Activated naive CD4-positive, alpha-beta T cell treated with anti-CD3 and anti-CD28 coated beads for 36 hours (primary cell): ENCODE measurements at regions of chr11 and their contacts with region 1.

Region 1: DNA sequence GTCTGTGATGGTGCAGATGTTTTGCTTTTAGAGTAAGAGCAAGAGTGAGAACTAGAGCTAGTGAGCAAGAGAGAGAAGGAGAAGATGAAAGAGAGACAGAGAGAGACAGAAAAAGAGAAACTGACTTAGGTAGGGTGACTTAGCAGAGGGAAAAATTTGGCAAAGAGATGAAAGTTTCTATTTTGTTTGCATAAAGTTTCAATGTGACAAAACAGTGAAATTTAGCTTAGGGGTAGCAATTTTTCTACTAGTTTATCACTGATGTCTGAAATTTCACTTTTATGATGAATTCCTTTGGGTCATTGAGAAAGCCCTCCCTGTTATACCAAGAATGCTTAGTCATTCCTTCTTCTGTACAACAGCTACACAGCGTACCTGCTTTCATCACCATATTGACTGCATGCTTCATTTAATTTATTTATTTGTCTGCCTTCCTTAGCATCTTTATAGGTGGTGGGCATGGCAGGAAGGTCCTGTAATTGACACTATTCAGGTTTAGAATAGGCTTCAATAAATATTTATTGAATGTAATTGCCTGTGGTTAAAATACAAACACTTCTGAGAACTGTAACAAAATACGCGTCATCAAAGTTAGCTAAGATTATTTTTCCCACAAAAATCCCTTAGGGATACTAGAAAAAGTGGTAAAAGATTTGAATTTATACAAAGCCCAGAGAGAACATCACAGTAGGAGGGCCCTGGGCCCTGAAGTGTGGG is 19.9 kb upstream of the CTSC start:
- DNase-seq: no peak
- H3K4me3 Mint-ChIP-seq: no peak overlapping the region
- H3K27ac Mint-ChIP-seq: peak overlapping the region; percentile 66
- H3K4me1 Mint-ChIP-seq: peaks cover 41% of the 10 kb centered on the region
- H3K27me3 Mint-ChIP-seq: no peaks in the 10 kb centered on the region

Region 2: GRCh38 chr11:88152381-88152780 is 205.1 kb before region 1 on chr11:
- CTCF ChIA-PET with region 1: no interaction called
- intact Hi-C with region 1: no loop called
- DNase-seq: no peak
- H3K4me3 Mint-ChIP-seq: no peak overlapping the region
- H3K27ac Mint-ChIP-seq: no peak overlapping the region
- H3K4me1 Mint-ChIP-seq: no peaks in the 10 kb centered on the region
- H3K27me3 Mint-ChIP-seq: peaks cover 14% of the 10 kb centered on the region

Region 3: DNA sequence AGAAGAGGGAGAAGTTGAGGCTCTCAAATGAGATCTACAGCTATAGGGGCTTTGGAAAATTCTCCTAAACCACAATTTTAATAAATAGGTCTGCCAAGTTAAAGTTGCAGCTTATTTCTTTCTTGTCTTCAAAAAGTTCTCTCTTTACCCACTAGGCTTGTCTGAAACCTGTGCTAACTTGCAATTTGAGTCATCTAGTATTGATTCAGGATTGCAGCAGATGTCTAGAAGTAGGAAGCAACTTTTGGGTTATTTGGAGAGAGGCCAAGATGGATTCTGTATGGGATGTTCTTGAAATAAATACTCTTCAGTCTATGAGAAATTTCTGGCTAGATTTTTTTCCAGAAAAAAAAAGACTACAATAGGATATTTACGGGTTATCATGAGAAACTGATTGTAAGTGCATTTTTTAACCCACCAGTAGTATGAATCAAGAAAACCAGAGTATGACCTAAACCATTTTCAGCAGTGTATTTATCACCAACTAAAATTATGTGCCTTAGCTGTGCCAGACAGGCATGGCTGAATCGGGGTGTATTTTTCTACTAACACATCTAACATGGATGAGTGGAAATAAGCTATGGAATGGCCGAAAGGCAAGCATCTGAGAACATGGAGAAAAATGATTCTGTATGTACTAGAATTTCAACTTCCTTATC is 177.4 kb before region 1 on chr11:
- CTCF ChIA-PET with region 1: no interaction called
- intact Hi-C with region 1: loop called (anchors 2 kb)
- DNase-seq: no peak
- H3K4me3 Mint-ChIP-seq: no peak overlapping the region
- H3K27ac Mint-ChIP-seq: no peak overlapping the region
- H3K4me1 Mint-ChIP-seq: peaks cover 19% of the 10 kb centered on the region
- H3K27me3 Mint-ChIP-seq: peaks cover 29% of the 10 kb centered on the region

Region 4: DNA sequence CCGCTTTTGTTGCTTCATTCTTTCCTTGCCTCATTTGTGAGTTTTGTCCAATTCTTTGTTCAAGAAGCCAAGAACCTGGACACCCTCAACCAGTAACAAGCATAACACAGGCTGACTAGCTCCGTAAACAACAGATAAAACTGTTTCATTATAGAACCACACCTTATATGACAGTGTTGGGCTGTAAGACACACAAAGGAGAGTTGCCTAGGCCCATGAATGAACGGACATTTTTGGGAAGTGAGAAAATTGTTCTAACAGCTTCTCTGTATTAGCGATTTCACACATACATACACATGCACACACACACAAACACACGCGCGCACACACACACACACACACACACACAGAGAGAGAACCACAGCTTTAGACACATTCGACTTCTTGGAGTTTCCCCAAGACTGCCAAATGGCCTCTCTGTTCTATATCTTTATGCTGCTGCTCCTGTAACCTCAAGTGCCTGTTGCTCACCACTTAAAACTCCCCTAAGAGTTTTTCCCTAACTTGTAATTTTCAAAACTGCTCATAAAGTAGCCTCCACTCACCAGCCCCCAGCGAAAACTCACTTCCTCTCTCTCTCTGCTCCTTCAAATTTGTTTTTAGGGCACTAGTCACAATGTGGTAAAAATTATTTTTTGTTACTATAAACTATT is 55.9 kb before region 1 on chr11:
- CTCF ChIA-PET with region 1: no interaction called
- intact Hi-C with region 1: loop called (anchors 2 kb)
- DNase-seq: no peak
- H3K4me3 Mint-ChIP-seq: no peak overlapping the region
- H3K27ac Mint-ChIP-seq: no peak overlapping the region
- H3K4me1 Mint-ChIP-seq: peaks cover 22% of the 10 kb centered on the region
- H3K27me3 Mint-ChIP-seq: no peaks in the 10 kb centered on the region

Region 5: DNA sequence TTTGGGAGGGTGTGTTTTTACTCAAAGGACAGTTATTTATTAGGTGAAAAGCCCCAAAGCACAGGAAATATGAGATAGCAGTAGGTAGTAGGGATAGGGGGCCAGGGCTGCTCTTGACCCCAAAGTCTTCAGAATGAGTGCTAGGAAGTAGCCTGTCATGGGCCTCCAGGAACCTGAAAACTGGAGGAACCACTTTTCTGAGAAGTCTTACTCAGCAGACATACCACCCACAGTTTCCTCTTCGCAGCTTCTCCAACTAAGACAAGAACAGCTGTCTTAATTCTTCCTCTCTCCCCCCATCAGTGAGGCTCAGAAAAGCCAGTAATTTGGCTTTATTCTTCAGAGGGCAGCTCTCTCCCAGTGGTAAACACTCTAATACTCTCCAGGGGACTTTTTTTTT is 64.0 kb after region 1 on chr11:
- CTCF ChIA-PET with region 1: no interaction called
- intact Hi-C with region 1: loop called (anchors 1 kb)
- DNase-seq: peak; percentile 63
- H3K4me3 Mint-ChIP-seq: no peak overlapping the region
- H3K27ac Mint-ChIP-seq: no peak overlapping the region
- H3K4me1 Mint-ChIP-seq: peaks cover 39% of the 10 kb centered on the region
- H3K27me3 Mint-ChIP-seq: no peaks in the 10 kb centered on the region

Region 6: DNA sequence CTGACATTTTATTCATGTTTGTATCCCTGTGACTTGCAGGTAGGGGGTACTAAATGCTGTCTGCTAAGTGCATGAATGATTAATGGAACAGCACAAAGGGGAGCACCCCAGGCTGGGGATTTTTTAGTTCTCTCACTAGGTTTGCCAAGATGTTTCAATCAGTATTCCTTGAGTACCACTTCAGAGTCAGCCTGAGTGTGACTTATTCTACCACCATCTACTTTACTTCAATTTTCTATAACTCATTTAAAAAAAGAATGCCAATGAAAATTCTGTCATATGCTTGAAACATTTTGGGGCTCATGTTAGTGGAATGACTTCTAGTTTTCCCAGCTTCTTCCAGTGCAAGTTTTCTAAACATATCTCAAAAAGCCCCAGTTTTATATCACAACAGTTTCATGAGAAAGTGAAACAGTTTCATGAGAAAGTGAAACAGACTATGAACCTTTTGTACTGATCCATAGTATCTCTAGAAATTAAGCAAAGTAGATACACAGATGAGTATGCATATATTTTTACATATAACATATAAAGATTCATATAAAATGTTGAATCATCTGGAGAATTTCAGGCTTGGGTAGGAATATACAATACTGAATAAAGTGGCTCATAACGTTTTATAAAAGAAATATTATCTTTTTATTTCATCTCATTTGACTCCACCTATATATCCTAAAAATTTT is 455.9 kb after region 1 on chr11:
- CTCF ChIA-PET with region 1: no interaction called
- intact Hi-C with region 1: loop called (anchors 1 kb)
- DNase-seq: peak; percentile 8
- H3K4me3 Mint-ChIP-seq: no peak overlapping the region
- H3K27ac Mint-ChIP-seq: no peak overlapping the region
- H3K4me1 Mint-ChIP-seq: peaks cover 13% of the 10 kb centered on the region
- H3K27me3 Mint-ChIP-seq: no peaks in the 10 kb centered on the region